AG04450 (cell line): ENCODE measurements at regions of chr17 and their contacts with region 1.

Region 1: GRCh38 chr17:8156246-8156992 is 4.2 kb upstream of the PER1 start:
- DNase-seq: peak; percentile 100
- H3K4me3 ChIP-seq: peak overlapping the region; percentile 72
- H3K27ac ChIP-seq: peak overlapping the region; percentile 97
- H3K27me3 ChIP-seq: no peaks in the 10 kb centered on the region
- CTCF ChIP-seq: no peak

Region 2: GRCh38 chr17:8173056-8173870 is 16.8 kb after region 1 on chr17:
- CTCF ChIA-PET with region 1: interaction called, 9 read pairs
- POLR2A ChIA-PET with region 1: interaction called, 23 read pairs
- DNase-seq: peak; percentile 96
- H3K4me3 ChIP-seq: peak overlapping the region; percentile 60
- H3K27ac ChIP-seq: peak overlapping the region; percentile 98
- H3K27me3 ChIP-seq: no peaks in the 10 kb centered on the region
- CTCF ChIP-seq: no peak

Region 3: DNA sequence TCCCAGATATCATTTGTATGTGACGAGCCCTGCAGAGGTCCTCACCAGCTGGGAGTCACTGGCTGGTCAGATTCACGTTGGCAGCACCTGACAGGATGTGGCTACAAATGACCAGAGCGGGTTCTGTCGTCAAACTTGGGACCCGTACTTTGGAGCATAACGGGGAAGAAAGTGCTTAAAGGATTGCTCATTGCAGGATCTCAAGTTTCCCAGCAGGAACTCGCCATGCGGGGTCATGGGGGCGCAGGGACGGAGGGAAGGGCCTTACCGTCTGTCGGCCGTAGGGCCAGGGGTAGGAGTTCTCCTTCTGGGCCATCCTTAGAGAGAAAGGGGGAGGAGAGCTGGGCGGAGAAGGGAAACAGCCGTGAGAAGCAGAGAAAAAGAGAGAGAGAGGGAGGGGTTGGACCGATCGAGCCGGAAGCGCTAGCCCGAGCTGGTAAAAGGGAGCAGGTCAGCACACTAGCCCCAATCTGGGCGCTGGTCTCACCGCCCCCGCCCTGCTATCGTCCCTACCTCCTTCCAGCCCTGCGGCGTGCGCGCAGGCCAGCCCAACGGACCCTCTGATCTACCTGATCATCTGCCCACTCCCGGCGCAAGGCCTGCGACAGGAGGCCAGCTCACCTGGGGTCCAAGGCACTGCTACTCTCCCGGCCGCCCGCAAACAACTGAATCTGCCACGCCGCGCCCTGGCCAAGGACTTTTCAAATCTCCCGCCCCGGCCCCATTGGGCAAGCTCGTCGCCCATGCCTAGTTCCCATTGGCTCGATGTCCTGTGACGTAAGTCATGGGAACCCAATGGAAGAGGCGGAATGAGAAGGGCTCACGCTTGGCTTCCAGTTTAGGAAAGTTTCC is 53.7 kb after region 1 on chr17 and contains the start of gene AURKB:
- CTCF ChIA-PET with region 1: no interaction called
- POLR2A ChIA-PET with region 1: no interaction called
- DNase-seq: peak; percentile 93
- H3K4me3 ChIP-seq: peak within 1 kb of the TSS; percentile 87
- H3K27ac ChIP-seq: peak within 1 kb of the TSS; percentile 78
- H3K27me3 ChIP-seq: no peaks in the 10 kb centered on the region
- CTCF ChIP-seq: no peak
- polyA plus RNA-seq, gene AURKB: 5.9 and 7.7 TPM in 2 replicates